ENCODE measurements at regions of chr16 and their contacts with region 1.

Region 1: GRCh38 chr16:21158208-21159110 is at the start of gene LDAF1:
- DNase-seq: no peak
- H3K4me3 ChIP-seq: peak within 1 kb of the TSS; percentile 75
- CTCF ChIP-seq: no peak

Region 2: DNA sequence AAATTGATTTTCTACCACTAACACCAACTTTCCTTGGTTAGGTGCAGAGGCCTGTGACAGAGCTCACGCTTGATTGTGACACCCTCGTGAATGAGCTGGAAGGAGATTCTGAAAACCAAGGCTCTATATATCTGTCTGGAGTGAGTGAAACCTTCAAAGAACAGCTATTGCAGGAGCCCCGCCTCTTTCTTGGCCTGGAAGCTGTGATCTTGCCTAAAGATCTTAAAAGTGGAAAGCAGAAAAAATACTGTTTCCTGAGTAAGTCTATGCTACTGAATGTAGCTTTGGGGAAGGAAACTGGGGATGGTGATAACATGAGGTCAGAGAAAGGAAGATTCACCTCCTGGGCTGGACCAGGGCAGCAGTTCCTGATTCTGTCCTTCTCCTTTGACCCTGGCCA is 313.9 kb before region 1 on chr16:
- CTCF ChIA-PET with region 1: interaction called, 33 read pairs
- POLR2A ChIA-PET with region 1: no interaction called
- DNase-seq: no peak
- H3K4me3 ChIP-seq: no peak overlapping the region
- CTCF ChIP-seq: no peak

Region 3: DNA sequence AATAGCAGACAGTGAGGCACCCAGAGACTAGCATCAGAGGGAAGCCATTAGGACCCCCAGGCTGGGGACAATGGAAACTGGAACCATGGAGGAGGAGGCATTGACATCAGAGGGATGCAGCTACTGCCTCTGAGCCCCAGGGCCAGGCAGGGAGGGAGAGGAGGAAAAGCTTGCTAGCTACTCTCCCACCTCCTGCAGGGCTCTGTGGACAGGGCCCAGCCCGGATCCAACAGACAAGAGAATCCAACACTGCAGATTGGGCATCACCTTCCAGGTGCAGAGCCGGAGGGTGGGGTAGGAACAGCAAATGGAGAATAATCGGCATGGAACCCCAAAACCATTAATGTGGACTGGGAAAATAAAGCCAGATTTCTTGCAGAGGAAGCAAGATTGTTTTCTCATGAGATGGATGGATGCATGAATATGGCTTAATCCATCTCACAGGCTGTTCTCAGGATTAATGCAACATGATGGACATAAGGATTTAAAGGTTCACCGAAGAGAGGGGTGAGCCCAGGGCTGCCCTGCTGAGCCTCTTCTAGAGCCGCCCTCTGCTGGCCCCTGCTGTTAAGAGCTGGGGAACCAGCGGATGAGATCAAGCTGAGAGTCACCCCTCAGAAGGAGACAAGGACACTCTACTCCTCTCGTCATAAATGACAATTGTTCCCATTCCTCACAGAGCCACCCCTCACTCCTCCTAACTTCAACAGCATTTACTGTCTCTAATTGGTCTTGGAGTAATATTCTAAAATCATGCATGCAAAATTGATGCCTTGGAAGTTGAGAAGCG is 56.6 kb before region 1 on chr16:
- CTCF ChIA-PET with region 1: interaction called, 17 read pairs
- POLR2A ChIA-PET with region 1: no interaction called
- DNase-seq: no peak
- H3K4me3 ChIP-seq: no peak overlapping the region
- CTCF ChIP-seq: peak; percentile 55

Region 4: DNA sequence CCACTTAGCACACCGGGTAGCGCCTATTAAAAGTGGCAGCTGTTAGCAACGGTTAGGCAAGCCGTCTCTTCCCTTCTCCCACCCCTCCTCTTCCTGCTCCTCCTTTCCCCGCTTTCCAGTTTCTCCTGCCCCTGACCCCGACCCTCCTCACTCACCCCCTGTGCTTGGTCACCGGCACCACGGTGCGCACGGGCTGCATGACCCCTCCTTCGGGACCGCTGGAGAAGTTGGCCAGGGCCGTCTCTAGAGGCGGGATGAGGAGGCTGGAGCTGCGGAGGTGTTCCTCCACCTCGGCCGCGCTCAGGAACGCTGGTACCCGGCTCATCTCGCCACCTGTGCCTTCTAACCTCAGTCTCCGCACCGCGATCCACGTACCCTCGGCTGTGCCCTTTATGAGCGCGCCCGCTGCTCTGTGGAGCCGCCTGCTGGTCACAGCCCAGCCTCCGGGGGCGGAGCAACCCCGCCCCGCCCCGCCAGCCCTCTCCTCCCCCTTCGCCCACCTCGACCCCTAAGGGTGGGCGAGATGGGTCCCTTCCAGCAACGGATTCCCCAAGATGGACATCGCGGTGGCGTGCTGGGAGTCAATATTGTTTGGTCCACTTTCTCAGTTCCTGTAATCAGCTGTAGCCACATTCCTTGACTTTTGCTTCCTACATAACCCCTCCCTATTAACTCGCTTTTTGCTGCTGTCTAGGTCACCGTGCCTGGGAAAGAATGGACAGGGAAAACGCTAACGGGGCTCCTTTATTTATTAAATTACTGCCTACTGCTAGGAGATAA is 119.7 kb after region 1 on chr16 and contains the start of gene CRYM:
- CTCF ChIA-PET with region 1: interaction called, 39 read pairs
- POLR2A ChIA-PET with region 1: no interaction called
- DNase-seq: no peak
- H3K4me3 ChIP-seq: peak within 1 kb of the TSS; percentile 27
- CTCF ChIP-seq: peak; percentile 82

Region 5: DNA sequence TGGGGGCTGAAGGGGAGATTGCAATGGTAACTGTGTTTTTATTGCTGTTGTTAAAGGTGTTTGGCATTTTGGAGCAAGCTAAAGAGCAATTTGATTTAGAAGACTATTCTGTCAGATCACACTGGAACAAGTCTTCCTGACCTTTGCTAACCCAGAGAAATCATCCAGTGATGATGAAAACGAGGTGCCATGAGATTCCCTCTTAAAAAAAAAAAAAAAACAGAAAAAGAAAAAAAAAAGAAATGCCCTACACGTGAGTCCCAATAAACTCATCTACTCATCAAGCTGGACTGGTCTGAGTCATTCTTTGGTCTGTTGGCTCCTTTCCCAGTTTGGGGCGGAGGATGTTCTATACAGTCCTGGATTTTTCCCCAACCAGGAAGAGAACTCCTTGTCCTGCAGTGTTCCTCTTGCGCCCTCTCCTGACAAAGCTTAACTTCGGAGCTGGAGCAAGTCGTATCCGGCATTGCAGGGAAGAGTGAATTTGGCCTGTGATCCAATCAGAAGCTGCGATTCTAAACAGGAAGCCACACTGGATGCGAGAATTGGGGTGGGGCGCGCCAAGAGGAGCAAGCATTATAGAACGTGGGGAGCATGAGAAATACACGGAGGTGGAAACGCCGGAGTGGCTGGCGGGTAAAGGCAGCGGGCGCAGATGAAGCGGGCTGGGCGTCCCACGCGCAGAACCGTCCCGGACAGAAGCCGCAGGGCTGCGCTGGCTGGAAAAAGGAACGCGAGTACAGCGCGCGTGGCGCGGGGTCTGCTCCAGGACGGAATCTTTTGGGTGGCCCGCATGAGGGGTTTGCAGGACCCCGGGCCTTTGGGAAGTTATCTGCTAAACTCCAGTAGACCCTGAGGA is 142.1 kb after region 1 on chr16:
- CTCF ChIA-PET with region 1: interaction called, 87 read pairs
- POLR2A ChIA-PET with region 1: interaction called, 8 read pairs
- DNase-seq: peak; percentile 99
- H3K4me3 ChIP-seq: peak overlapping the region; percentile 80
- CTCF ChIP-seq: peak; percentile 88